HepG2 (cell line): ENCODE measurements at regions of chr1 and their contacts with region 1.

Region 1: DNA sequence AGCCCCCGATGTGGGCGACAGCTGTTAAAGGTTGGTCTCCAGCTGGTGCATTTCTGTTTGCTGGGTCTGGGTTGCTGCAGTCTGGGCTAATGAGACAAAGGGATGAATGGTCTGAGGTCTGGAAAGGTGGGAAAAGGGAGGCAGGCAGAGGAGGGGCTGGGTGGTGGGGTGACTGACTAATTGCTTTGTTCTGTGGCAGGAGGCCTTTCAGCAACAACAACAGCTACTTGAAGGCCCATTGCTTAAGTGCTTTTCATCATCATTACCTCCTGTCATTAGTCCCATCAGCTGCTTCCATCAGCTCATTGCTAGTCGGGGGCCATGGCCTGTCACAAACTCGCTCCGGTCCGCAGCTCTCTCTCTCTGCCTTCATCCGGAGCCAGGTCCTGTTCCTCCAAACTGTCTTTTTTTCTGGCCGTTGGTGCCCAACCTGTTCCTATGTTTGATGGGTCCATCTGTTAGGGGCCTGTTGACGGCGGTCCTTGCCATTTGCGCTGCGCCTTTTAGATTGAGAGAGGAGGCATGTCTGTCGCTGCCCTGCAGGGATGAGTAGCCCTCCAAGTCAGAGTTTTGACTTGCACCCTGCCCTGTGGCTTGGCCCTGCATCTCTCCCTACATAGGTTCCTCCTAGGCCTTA is 105.6 kb upstream of the PLXNA2 start:
- DNase-seq: no peak
- ATAC-seq: no peak
- H3K4me3 ChIP-seq: no peak overlapping the region
- H3K27ac ChIP-seq: no peak overlapping the region
- H3K4me1 ChIP-seq: no peaks in the 10 kb centered on the region
- H3K27me3 ChIP-seq: no peaks in the 10 kb centered on the region; a peak in 1 of 5 replicates
- CTCF ChIP-seq: no peak
- EP300 ChIP-seq: no peak
- POLR2A ChIP-seq: no peak
- RAD21 ChIP-seq: no peak

Region 2: GRCh38 chr1:208479435-208479834 is 129.6 kb after region 1 on chr1:
- CTCF ChIA-PET with region 1: no interaction called
- POLR2A ChIA-PET with region 1: no interaction called
- in situ Hi-C with region 1: no loop called
- intact Hi-C with region 1: loop called (anchors 2 kb)
- DNase-seq: no peak
- ATAC-seq: no peak
- H3K4me3 ChIP-seq: no peak overlapping the region
- H3K27ac ChIP-seq: no peak overlapping the region
- H3K4me1 ChIP-seq: no peaks in the 10 kb centered on the region
- H3K27me3 ChIP-seq: no peaks in the 10 kb centered on the region
- CTCF ChIP-seq: no peak
- EP300 ChIP-seq: no peak
- POLR2A ChIP-seq: no peak
- RAD21 ChIP-seq: no peak

Region 3: DNA sequence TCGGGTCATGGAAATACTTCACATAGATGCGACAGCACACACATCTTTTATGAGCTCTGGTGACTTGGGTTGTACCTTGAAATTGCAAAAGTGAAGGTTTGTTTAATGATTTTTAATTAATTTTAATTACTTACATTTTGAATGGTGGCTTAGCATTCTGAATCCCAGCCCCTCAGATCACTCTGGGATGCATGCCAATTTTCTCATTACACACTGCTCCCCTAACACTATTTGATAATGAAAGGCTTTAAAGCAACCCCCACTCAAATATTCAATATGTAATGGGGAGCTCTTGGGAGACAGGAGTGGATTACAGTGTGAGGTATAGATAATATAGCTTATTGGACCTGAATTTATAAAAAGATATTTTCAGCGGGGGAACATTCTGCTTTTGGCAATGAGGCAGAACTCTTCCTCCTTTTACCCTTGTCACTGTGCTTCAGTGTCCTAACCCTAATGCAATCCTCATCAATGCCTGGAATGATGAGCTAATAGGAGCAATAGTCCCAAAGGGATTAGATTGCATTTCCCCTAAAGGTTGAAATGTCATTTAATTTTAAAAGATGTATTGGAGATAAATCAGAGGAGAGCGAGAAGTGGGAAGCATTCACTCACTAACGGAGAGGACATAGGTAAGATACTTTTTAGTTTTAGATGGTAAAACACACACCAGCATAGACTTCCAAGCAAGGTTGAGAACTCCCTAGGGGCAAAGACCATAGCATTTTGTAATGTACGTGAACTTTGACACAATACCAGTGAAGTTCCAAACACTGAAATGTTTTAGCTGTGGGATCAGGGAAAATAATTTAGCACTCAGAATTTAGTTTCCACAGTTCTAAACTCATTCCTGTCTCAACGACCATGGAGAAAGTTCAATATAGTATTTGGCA is 278.5 kb after region 1 on chr1:
- CTCF ChIA-PET with region 1: no interaction called
- POLR2A ChIA-PET with region 1: no interaction called
- in situ Hi-C with region 1: no loop called
- intact Hi-C with region 1: no loop called
- DNase-seq: no peak
- ATAC-seq: no peak
- H3K4me3 ChIP-seq: no peak overlapping the region
- H3K27ac ChIP-seq: no peak overlapping the region
- H3K4me1 ChIP-seq: no peaks in the 10 kb centered on the region
- H3K27me3 ChIP-seq: no peaks in the 10 kb centered on the region
- CTCF ChIP-seq: no peak
- EP300 ChIP-seq: no peak
- POLR2A ChIP-seq: no peak
- RAD21 ChIP-seq: no peak

Region 4: DNA sequence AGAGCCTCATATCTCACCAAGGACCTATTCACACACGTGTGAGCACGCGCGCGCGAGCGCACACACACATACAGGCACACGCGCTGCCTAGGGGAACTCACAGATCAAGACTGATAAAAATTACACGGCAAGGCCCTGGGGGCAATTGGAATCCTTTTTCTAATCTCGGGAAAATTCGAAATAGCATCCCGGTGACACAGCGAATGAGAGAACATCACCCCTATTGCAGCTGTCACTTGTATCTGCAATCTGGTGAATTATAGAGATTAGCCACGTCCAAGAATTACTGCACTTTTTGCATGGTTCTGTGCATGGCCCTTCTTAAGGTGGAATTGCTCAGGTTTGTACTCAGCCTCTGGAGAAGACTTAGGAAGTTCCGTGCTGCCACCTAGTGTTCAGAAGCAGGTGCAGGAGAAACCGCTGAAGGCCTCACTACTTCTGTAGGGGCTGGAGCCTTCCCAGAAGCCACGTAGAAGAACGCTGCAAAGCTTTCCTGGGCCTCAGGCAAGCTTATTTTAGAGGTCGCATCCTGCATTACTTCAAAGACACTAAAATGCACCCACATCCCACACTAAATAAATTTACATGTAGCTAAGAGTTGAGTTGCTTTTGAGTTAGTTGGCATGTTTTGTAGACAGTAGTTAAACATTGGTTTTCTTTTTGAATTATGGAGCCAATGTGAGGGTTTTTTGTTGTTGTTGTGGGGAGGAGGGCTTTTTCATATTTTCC is 1004.5 kb after region 1 on chr1:
- CTCF ChIA-PET with region 1: no interaction called
- POLR2A ChIA-PET with region 1: no interaction called
- in situ Hi-C with region 1: no loop called
- intact Hi-C with region 1: loop called (anchors 10 kb)
- DNase-seq: peak; percentile 59
- ATAC-seq: peak; percentile 97
- H3K4me3 ChIP-seq: no peak overlapping the region
- H3K27ac ChIP-seq: no peak overlapping the region
- H3K4me1 ChIP-seq: no peaks in the 10 kb centered on the region
- H3K27me3 ChIP-seq: no peaks in the 10 kb centered on the region
- CTCF ChIP-seq: peak; percentile 75
- EP300 ChIP-seq: no peak
- POLR2A ChIP-seq: no peak
- RAD21 ChIP-seq: 0 out of 2 replicates have a peak, but pooled peaks have one; percentile 32